Tibial artery (tissue), 4 donors: ENCODE measurements at regions of chr4 and their contacts with region 1.

Region 1: GRCh38 chr4:170047771-170048354 is 21.7 kb upstream of the MFAP3L start:
- DNase-seq: peak in 1 of 2 donors; percentile 33
- H3K4me3 ChIP-seq: no peak overlapping the region
- H3K27ac ChIP-seq: no peak overlapping the region
- H3K4me1 ChIP-seq: no peaks in the 10 kb centered on the region
- H3K27me3 ChIP-seq: peaks cover 0 to 3% of the 10 kb centered on the region in 2 donors
- CTCF ChIP-seq: peak; percentile 72 to 85

Region 2: DNA sequence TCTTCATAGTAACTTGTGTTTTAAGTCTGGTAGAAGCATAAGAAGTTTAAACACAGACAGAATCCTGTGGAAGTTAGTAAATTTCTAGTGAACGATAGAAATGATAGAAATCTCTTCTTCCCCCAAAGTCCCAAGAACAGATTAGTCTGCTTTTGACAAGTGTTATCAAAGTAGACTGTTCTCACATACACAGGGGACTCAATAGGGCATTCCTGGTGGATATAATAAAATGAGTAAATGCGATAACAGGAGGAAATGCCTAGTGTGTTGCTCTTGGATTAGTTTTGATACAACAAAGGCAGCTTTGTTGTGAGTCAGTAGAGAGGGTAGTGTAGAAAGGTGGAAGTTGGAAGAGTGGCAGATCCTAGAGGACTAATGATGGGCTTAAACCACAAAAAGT is 384.0 kb before region 1 on chr4:
- intact Hi-C with region 1: no loop called
- DNase-seq: no peak
- H3K4me3 ChIP-seq: no peak overlapping the region
- H3K27ac ChIP-seq: no peak overlapping the region
- H3K4me1 ChIP-seq: peaks cover 0 to 26% (median 11%) of the 10 kb centered on the region in 4 donors
- H3K27me3 ChIP-seq: no peaks in the 10 kb centered on the region
- CTCF ChIP-seq: no peak

Region 3: DNA sequence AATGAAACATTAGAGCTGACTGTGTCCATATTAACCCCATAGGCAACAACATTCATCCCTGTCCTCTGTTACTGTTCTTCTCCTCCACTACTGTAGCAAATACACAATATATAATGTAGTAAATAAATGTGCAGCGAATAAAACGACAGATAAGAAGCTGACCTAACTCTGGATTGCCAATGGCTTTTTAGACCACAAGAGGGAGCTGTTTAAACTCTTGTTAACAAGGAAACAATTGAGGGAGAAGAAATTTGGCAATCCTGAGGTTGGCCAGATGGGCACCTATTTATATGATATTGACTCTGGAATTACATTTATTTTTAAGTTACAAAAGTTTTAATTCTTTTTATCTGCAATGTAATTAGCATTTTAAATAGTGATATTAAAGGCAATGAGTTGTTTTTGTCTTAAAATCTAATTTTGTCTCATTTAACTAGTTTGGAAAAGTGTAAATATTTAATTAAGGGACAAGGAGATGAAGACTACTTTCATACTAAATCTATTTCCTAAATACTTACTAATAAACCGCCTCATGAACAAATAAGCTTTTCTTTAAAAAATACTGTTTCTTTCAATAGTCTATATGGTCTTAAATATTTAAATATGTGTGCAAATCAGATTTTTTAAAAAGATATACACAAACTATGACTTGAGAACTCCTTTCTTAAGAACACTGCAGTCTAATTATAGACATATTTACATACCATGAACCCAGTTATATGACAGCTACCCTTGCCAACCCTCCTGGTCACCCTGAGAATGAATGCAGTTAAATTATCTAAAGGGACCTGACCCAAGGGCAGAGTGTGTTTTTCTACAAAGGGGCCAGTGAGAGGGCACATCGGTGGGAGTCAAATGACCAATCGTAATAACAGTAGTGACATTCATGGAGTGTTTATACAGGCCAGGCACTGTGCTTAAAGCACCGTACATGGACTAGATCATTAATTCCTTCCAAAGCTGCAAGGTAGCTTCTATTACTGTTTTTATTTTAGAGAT is 237.2 kb before region 1 on chr4:
- intact Hi-C with region 1: loop called (anchors 2 kb)
- DNase-seq: no peak
- H3K4me3 ChIP-seq: no peak overlapping the region
- H3K27ac ChIP-seq: no peak overlapping the region
- H3K4me1 ChIP-seq: no peaks in the 10 kb centered on the region
- H3K27me3 ChIP-seq: no peaks in the 10 kb centered on the region
- CTCF ChIP-seq: peak; percentile 81 to 82

Region 4: DNA sequence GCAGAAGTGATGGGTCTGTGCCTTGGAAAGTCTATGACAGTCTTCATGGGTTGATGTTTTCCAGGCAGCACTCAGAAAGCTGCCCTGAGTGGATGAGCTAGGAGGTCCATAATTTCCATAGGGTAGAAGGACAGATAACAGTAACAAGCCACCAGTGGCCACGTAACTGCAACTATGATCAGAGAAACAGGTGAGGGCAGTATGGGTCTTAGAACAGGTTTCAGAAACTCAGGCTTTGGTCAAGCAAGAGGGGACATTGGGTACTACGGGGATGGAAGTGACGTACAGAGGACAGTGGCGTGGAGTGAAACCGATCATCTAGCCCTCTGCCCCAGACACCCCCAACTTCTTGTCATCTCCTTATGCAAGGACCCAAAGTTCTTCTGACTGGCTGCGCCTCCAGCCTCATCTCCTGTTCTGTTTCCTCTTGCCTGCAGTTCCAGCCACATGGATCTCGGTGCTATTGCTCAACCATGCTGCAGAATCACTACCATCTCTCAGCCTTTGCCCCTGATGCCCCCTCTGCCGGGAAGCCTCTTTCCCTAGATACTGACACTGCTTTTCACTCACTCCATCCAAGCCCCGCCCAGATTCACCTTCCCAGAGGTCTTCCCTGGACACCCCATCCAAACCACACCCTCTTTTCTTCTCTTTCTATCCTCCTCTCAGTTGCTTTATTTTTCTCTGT is 145.1 kb before region 1 on chr4:
- intact Hi-C with region 1: loop called (anchors 10 kb)
- DNase-seq: no peak
- H3K4me3 ChIP-seq: no peak overlapping the region
- H3K27ac ChIP-seq: no peak overlapping the region
- H3K4me1 ChIP-seq: no peaks in the 10 kb centered on the region
- H3K27me3 ChIP-seq: no peaks in the 10 kb centered on the region
- CTCF ChIP-seq: peak; percentile 33 to 50

Region 5: GRCh38 chr4:169921732-169922131 is 126.1 kb before region 1 on chr4:
- intact Hi-C with region 1: no loop called
- DNase-seq: no peak
- H3K4me3 ChIP-seq: no peak overlapping the region
- H3K27ac ChIP-seq: no peak overlapping the region
- H3K4me1 ChIP-seq: peaks cover 0 to 5% (median 0%) of the 10 kb centered on the region in 4 donors
- H3K27me3 ChIP-seq: no peaks in the 10 kb centered on the region
- CTCF ChIP-seq: no peak

Region 6: DNA sequence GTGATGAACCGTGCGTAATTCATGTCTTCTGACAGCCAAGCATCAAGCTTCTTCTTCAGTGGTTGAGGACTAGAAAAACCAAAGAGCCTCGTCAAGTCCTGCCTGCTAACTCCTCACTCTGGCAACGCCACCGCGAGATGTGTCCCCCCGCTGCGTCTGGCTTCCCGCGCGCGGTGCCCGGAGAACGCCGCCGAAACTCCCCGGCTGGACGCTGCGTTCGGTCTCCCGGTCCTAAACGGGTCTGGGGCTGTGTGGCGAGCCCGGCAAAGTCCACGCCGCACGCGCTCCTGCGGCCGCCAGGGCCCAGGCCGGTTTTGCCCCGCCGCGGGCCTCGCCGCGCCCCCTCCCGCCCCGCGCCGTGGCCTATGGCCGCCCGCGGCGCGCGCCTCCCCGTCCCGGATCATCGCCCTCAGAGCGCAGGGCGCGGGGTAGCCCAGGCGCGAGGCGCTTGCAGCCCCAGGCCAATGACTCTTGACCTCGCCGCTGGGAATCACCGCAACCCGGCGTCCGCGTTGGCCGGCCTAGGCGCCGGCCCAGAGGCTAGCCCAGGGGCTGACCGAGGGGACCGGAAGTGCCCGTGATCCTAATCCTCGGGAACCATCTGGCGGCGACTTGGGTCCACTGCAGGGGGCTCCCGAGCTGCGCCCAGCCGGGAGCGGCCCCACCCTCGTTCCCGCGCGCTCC is 41.9 kb after region 1 on chr4 and contains the start of gene AADAT:
- intact Hi-C with region 1: no loop called
- DNase-seq: peak; percentile 67 to 85
- H3K4me3 ChIP-seq: peak within 1 kb of the TSS; percentile 55 to 68
- H3K27ac ChIP-seq: peak within 1 kb of the TSS; percentile 59 to 63
- H3K4me1 ChIP-seq: peaks cover 0 to 14% (median 9%) of the 10 kb centered on the region in 4 donors
- H3K27me3 ChIP-seq: no peaks in the 10 kb centered on the region
- CTCF ChIP-seq: peak; percentile 71 to 78